HepG2 (cell line): ENCODE measurements at regions of chr6 and their contacts with region 1.

Region 1: DNA sequence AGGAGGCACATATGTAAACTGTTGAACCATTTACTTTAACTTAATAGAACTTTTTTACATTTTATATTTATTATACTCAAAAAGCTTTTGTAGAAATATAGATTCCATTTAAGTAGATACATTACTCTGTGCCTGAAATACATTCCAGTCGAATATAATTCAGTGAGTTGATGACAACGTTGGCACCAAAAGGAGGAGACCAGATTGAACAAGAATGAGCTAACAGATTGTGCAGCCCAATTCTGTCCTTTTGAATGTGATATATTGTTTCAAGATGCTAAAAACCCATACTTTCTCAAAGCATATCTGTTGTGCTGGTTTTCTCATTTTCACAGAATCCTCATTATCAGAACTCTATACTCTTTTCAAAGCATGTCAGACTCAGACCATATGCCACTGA is 147.4 kb upstream of the SIM1 start:
- DNase-seq: no peak
- ATAC-seq: no peak
- H3K4me3 ChIP-seq: no peak overlapping the region
- H3K27ac ChIP-seq: no peak overlapping the region
- H3K4me1 ChIP-seq: no peaks in the 10 kb centered on the region
- H3K27me3 ChIP-seq: no peaks in the 10 kb centered on the region
- CTCF ChIP-seq: no peak
- EP300 ChIP-seq: no peak
- POLR2A ChIP-seq: no peak
- RAD21 ChIP-seq: no peak

Region 2: DNA sequence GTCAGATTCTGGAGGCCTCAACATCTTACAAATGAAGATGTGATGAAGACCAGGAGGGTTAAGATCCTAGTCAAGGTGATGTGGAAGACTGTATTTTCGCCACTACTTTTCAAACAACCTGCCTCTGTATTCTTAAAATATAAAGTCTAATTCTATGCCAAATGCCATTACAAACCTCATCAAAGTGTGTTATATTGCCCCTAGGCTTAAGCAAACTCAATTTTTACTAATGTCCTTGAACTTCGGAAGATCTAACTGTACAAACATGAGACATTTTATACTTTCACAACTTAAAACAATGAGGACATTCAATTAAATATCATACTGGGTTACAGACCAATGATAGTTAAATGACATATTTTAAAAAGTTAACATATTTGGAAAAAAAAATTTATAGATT is 250.0 kb after region 1 on chr6:
- CTCF ChIA-PET with region 1: no interaction called
- POLR2A ChIA-PET with region 1: no interaction called
- in situ Hi-C with region 1: no loop called
- intact Hi-C with region 1: loop called (anchors 5 kb)
- DNase-seq: peak; percentile 84
- ATAC-seq: peak; percentile 71
- H3K4me3 ChIP-seq: no peak overlapping the region
- H3K27ac ChIP-seq: peak overlapping the region; percentile 40
- H3K4me1 ChIP-seq: peaks cover 30% of the 10 kb centered on the region
- H3K27me3 ChIP-seq: no peaks in the 10 kb centered on the region
- CTCF ChIP-seq: no peak
- EP300 ChIP-seq: 0 out of 4 replicates have a peak, but pooled peaks of 1 of the 2 experiments have one; percentile 41
- POLR2A ChIP-seq: no peak
- RAD21 ChIP-seq: no peak